ENCODE measurements at regions of chr3 and their contacts with region 1.

Region 1: GRCh38 chr3:48400824-48401433 is 28.9 kb downstream of the FBXW12 start:
- DNase-seq: peak; percentile 44
- H3K4me3 Mint-ChIP-seq: no peak overlapping the region
- H3K27ac Mint-ChIP-seq: no peak overlapping the region
- H3K4me1 Mint-ChIP-seq: no peaks in the 10 kb centered on the region
- H3K27me3 Mint-ChIP-seq: no peaks in the 10 kb centered on the region

Region 2: DNA sequence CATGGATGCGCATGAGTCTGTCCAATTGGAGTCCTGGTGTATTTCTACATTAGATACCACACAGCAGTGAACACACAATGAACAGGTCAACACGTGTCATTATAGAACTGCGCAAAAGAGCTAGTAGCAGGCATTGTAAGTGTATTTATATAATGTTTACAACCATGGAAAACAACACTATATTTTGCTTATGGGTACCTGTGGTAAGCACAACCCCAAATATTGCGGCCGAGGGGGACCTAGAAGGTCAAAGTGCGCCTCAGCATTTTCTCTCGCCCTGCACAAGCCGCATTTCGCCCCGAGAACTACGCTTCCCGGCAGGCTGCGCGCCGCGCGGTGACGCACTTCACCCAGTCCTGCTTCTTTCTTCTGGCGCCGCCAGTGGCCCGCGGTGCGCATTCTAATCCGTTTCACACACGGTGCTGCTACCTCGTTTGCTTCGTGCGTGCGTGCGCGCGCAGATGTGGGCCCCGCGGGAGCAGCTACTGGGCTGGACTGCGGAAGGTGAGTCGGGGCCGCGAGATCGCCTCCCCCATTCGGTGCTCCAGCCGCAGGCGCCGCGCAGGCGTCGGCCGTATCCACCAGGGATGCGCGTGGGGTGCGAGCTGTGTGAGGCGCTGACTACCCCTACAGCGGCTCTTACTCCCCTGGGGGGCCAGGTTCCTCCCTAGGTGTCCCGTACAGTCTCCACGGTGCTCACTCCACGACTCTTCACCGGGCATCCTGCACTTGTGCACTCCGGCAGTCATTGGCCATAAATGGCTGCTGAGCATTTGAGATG is 160.0 kb before region 1 on chr3 and contains the start of gene ZNF589:
- intact Hi-C with region 1: loop called (anchors 2 kb)
- DNase-seq: peak; percentile 93
- H3K4me3 Mint-ChIP-seq: peak within 1 kb of the TSS; percentile 91
- H3K27ac Mint-ChIP-seq: peak within 1 kb of the TSS; percentile 95
- H3K4me1 Mint-ChIP-seq: peaks cover 19% of the 10 kb centered on the region
- H3K27me3 Mint-ChIP-seq: no peaks in the 10 kb centered on the region
- total RNA-seq, gene ZNF589: 33.0 and 34.2 TPM in 2 replicates

Region 3: GRCh38 chr3:48507351-48508061 is 106.6 kb after region 1 on chr3:
- intact Hi-C with region 1: loop called (anchors 1 kb)
- DNase-seq: peak; percentile 51
- H3K4me3 Mint-ChIP-seq: peak overlapping the region; percentile 58
- H3K27ac Mint-ChIP-seq: peak overlapping the region; percentile 55
- H3K4me1 Mint-ChIP-seq: peaks cover 39% of the 10 kb centered on the region
- H3K27me3 Mint-ChIP-seq: peaks cover 3% of the 10 kb centered on the region

Region 4: GRCh38 chr3:48609088-48610005 is 208.4 kb after region 1 on chr3 and contains the start of gene UQCRC1:
- intact Hi-C with region 1: loop called (anchors 1 kb)
- DNase-seq: peak; percentile 92
- H3K4me3 Mint-ChIP-seq: peak within 1 kb of the TSS; percentile 100
- H3K27ac Mint-ChIP-seq: peak within 1 kb of the TSS; percentile 97
- H3K4me1 Mint-ChIP-seq: peaks cover 22% of the 10 kb centered on the region
- H3K27me3 Mint-ChIP-seq: peaks cover 2% of the 10 kb centered on the region
- total RNA-seq, gene UQCRC1: 191 and 193 TPM in 2 replicates

Region 5: GRCh38 chr3:48685602-48686511 is 284.9 kb after region 1 on chr3 and contains the start of gene NCKIPSD:
- intact Hi-C with region 1: loop called (anchors 1 kb)
- DNase-seq: peak; percentile 85
- H3K4me3 Mint-ChIP-seq: peak within 1 kb of the TSS; percentile 97
- H3K27ac Mint-ChIP-seq: peak within 1 kb of the TSS; percentile 95
- H3K4me1 Mint-ChIP-seq: peaks cover 38% of the 10 kb centered on the region
- H3K27me3 Mint-ChIP-seq: no peaks in the 10 kb centered on the region
- total RNA-seq, gene NCKIPSD: 40.8 and 45.5 TPM in 2 replicates